Tibial artery (tissue), 4 donors: ENCODE measurements at regions of chr15 and their contacts with region 1.

Region 1: DNA sequence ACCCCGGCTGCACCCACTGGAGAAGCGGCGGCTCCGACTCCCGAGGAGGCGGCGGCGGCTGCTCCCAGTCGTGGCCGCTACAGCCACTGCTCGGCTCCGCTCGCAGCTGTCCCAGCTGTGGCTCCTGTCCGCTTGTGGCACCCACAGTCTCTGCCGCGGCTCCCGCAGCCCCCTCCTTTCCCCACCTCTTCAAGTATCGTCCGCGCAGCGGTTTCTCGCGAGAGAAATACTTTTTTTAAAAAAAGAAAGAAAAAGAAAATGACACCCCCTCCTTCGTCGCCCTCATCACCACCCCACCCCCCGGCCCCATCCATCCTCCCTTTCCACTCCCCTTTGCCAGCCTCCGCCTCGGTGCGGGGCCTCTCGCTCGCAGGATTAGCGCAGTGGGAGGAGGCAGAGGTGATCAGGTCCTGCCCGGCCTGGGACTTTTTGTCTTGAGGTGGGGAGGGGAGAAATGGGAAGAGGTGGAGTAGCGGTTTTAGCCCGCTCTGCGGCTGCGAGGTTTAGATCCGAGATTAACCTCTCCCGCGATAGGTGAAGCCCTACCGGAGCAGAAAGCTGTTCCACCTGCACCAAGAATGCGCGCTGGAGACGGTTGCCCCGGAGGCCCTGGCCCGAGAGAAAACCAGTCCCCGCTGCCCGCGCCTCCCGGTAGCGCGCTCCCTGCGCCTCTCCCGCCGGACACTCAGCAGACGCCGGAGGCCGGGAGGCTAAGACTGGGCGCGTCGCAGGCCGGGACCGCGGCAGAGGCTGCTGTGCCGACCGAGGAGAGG is at the start of gene FBN1:
- DNase-seq: peak; percentile 83 to 91
- H3K4me3 ChIP-seq: peak within 1 kb of the TSS; percentile 93 to 98
- H3K27ac ChIP-seq: peak within 1 kb of the TSS; percentile 93 to 99
- H3K4me1 ChIP-seq: peaks cover 0 to 37% (median 21%) of the 10 kb centered on the region in 4 donors
- H3K27me3 ChIP-seq: no peaks in the 10 kb centered on the region
- CTCF ChIP-seq: no peak

Region 2: GRCh38 chr15:48010316-48010715 is 635.4 kb before region 1 on chr15:
- intact Hi-C with region 1: no loop called
- DNase-seq: no peak
- H3K4me3 ChIP-seq: no peak overlapping the region
- H3K27ac ChIP-seq: no peak overlapping the region
- H3K4me1 ChIP-seq: no peaks in the 10 kb centered on the region
- H3K27me3 ChIP-seq: no peaks in the 10 kb centered on the region
- CTCF ChIP-seq: no peak

Region 3: GRCh38 chr15:48800811-48801455 is 155.2 kb after region 1 on chr15:
- intact Hi-C with region 1: loop called (anchors 10 kb)
- DNase-seq: no peak
- H3K4me3 ChIP-seq: no peak overlapping the region
- H3K27ac ChIP-seq: no peak overlapping the region
- H3K4me1 ChIP-seq: peaks cover 0 to 4% (median 4%) of the 10 kb centered on the region in 4 donors
- H3K27me3 ChIP-seq: no peaks in the 10 kb centered on the region
- CTCF ChIP-seq: peak; percentile 41 to 56